WTC11 (cell line): ENCODE measurements at regions of chr7 and their contacts with region 1.

Region 1: DNA sequence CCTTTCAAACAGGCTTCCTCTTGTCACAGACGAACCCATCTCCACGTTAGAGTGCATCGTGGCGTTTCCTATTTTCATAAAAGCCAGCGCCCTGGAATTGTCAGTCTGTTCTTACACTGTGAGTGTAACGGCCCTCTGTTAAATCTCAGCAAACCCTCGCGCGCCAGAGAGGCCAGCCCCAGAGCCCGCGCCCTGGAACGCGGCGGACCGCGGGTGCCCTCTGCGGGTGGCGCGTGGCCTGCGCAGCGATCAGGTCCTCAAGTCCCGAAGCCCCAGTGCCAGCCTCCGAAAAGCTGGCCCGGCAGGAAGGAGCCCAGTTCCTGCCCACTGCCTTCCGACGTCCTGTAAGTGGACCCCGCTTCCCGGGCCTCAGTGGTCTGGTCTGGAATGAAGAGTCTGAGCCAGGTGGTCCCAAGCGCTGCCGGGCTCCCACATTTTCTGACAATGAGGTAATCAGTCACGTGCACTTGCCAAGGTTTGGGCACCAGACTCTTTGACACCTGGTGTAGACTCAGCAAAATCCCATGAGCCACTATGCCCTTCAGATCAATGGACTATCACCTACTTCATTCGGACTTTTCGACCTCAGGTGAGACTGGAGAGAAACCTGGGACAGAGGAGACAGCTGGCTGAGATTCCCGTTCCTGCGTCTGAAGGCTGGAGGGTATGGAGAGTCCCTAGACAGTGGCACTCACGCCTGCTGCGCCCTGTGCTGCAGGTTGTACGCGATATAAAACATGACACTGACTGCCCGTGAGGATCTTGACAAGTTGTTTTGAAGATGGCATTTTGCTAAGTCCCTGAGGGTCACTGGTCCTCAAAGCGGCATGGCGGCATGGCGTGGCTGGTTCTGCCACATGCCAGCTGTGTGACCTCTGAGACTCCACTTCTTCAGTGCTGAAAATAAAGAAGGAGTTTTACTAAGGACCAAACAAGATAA is 109.4 kb upstream of the LANCL2 start:
- DNase-seq: peak; percentile 81
- ATAC-seq: peak; percentile 68
- H3K4me3 Mint-ChIP-seq: peak overlapping the region; percentile 85
- H3K27ac Mint-ChIP-seq: no peak overlapping the region
- H3K4me1 Mint-ChIP-seq: peaks cover 6% of the 10 kb centered on the region
- H3K27me3 Mint-ChIP-seq: peaks cover 57% of the 10 kb centered on the region
- CTCF ChIP-seq: peak; percentile 50; the same call in 1 of the 2 replicates

Region 2: DNA sequence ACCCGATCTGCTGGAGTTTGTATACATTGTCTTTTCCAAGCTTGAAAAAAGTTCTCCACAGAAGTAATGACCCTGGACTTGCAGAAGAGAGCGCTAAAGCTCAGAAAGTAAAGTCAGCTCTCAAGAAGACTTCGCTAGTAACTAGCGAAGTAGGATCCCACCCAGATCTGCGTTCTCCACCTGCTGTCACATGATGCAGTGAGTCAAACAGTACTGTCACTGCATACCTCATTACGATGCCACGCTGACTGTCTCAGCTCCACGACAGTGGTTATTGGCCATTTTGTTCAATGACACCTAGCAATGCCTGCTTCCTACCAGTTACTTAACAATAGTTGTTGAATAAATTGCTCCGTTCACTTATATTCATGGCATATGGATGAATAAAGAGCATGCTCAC is 467.1 kb before region 1 on chr7:
- CTCF ChIA-PET with region 1: interaction called, 47 read pairs
- POLR2A ChIA-PET with region 1: interaction called, 3 read pairs
- DNase-seq: peak; percentile 40
- ATAC-seq: peak; percentile 94
- H3K4me3 Mint-ChIP-seq: no peak overlapping the region
- H3K27ac Mint-ChIP-seq: no peak overlapping the region
- H3K4me1 Mint-ChIP-seq: peaks cover 4% of the 10 kb centered on the region
- H3K27me3 Mint-ChIP-seq: peaks cover 18% of the 10 kb centered on the region
- CTCF ChIP-seq: 0 out of 2 replicates have a peak, but pooled peaks have one; percentile 16

Region 3: GRCh38 chr7:54992871-54993490 is 262.8 kb before region 1 on chr7:
- CTCF ChIA-PET with region 1: interaction called, 15 read pairs
- POLR2A ChIA-PET with region 1: no interaction called
- DNase-seq: no peak
- ATAC-seq: no peak
- H3K4me3 Mint-ChIP-seq: no peak overlapping the region
- H3K27ac Mint-ChIP-seq: no peak overlapping the region
- H3K4me1 Mint-ChIP-seq: peaks cover 11% of the 10 kb centered on the region
- H3K27me3 Mint-ChIP-seq: no peaks in the 10 kb centered on the region
- CTCF ChIP-seq: no peak

Region 4: DNA sequence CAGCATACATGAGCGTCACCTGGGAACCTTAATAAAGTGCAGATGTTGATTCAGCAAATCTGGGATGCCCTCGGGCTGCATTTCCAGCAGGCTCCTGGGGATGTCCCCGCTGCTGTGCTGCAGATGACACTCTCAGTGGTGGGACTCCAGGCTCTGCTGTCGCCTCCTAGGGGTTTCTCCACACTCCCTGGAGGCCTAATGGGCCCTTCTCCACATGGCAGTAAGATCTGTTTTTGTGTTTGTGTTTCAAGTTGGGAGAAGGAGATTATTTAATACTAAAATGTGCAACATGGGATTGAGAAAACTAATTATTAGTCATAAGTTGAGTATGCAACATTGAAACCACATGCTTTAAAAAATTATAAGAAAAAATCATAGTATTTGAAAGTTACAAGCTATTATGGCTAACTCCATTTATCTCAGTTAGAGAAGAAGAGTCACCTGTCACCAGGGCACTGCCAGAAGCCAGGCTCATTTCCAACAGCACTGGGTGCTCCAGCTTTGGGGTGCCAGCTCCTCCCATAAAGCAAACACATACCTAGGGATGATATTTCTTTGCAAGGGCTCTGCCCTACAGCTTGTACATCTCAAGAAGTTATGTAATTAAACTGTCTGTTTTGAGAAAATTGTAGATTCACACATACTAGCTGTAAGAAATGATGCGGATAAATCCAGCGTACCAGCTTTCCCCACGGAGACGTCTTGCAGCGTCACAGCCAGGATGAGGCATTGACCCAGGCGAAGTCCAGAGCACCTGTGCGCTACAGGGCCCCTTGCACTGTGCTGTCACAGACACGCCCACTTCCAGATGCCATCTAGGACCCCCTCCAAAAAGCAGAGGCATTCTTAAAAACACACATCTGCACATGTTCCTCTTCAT is 130.5 kb before region 1 on chr7:
- CTCF ChIA-PET with region 1: interaction called, 22 read pairs
- POLR2A ChIA-PET with region 1: no interaction called
- DNase-seq: no peak
- ATAC-seq: peak; percentile 74
- H3K4me3 Mint-ChIP-seq: no peak overlapping the region
- H3K27ac Mint-ChIP-seq: no peak overlapping the region
- H3K4me1 Mint-ChIP-seq: peaks cover 18% of the 10 kb centered on the region
- H3K27me3 Mint-ChIP-seq: no peaks in the 10 kb centered on the region
- CTCF ChIP-seq: no peak

Region 5: GRCh38 chr7:55180662-55181542 is 74.9 kb before region 1 on chr7:
- CTCF ChIA-PET with region 1: interaction called, 10 read pairs
- POLR2A ChIA-PET with region 1: no interaction called
- DNase-seq: no peak
- ATAC-seq: no peak
- H3K4me3 Mint-ChIP-seq: no peak overlapping the region
- H3K27ac Mint-ChIP-seq: no peak overlapping the region; the same call in 1 of the 2 replicates
- H3K4me1 Mint-ChIP-seq: peaks cover 6% of the 10 kb centered on the region
- H3K27me3 Mint-ChIP-seq: no peaks in the 10 kb centered on the region
- CTCF ChIP-seq: no peak

Region 6: DNA sequence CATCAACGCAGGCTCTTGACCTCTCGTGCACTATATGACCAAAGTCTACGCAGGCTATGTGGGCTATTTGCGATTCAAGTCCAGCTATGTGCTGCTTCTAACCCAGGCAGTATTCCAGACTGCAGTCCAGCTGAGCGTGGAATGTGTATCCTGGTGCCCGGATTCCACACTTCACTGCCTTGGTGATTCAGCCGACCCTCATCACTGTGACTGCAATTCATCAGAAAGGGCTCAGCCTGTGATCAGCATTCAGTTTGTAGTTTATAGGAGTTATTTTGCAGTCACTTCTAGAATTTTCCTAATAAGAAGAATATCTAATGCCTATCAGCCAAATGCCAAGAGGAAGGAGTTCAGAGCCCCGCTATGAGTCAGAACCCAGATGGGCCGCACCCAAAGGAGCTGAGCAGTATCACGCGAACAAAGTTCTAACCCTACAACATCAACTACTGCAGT is 10.5 kb before region 1 on chr7:
- CTCF ChIA-PET with region 1: interaction called, 15 read pairs
- POLR2A ChIA-PET with region 1: no interaction called
- DNase-seq: no peak
- ATAC-seq: no peak
- H3K4me3 Mint-ChIP-seq: no peak overlapping the region
- H3K27ac Mint-ChIP-seq: no peak overlapping the region
- H3K4me1 Mint-ChIP-seq: peaks cover under 1% of the 10 kb centered on the region; the same call in 1 of the 2 replicates
- H3K27me3 Mint-ChIP-seq: peaks cover under 1% of the 10 kb centered on the region; the same call in 1 of the 2 replicates
- CTCF ChIP-seq: no peak